Activated CD8-positive, alpha-beta T cell treated with anti-CD3 and anti-CD28 coated beads for 36 hours (primary cell): ENCODE measurements at regions of chr6 and their contacts with region 1.

Region 1: DNA sequence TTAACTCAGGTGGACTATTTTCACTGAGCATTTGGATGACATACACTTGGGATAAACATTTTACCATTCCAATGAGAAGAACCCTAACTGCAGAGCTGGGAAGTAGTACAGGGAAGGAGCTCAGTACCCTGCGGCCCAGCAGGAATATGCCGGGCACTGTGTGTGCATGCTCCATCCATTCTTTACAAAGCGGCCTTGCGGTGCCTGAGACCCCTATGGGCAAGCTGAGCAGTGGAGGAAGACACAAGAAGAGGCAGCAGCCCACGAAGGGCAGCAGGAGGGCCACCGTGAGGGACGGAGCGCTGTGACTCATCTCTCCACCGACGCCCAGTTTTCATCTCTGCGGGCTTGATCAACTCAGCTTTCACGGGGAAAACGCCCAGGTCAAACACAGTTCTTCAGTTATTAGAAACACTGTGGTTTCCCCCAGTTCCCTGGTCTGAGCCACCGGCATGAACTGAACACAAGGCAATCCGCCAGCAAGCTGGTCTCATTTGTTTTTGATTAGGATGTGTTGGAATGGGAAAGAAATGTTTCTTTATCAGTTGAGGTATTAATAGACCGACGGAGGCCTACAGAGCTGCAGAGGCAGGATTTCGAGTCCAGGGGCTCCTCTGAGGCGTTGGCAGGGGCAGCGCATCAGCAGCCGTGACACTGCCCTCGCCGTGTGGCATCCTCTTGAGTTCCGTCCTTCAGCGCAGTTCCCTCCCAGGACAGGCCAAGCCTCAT is 44.9 kb downstream of the IRF4 start:
- DNase-seq: no peak
- ATAC-seq: no peak
- H3K4me3 Mint-ChIP-seq: no peak overlapping the region
- H3K27ac Mint-ChIP-seq: no peak overlapping the region
- H3K4me1 Mint-ChIP-seq: peaks cover 34% of the 10 kb centered on the region
- H3K27me3 Mint-ChIP-seq: no peaks in the 10 kb centered on the region
- CTCF ChIP-seq: no peak

Region 2: DNA sequence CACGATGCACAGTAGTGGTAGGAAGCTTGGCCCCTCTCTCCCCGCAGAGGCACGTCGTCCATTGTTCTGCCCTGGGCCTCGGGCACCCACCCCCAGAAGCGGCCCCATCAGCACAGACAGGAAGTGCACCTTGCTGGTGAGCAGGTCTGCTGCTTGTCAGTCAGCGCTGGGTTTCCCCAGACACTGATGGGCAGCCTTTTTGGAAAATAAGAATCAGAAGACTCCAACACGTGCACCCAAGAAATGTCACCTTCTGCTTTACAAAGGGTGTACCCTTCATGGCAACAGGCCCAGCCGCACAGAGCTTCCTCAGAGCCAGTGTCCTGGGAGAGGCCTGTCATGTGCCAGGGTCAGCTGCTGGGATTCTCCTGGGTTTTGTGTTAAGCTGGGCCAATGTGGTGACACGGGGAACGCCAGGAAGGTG is 79.6 kb before region 1 on chr6:
- CTCF ChIA-PET with region 1: no interaction called
- POLR2A ChIA-PET with region 1: no interaction called
- intact Hi-C with region 1: no loop called
- DNase-seq: peak; percentile 70
- ATAC-seq: peak; percentile 92
- H3K4me3 Mint-ChIP-seq: no peak overlapping the region
- H3K27ac Mint-ChIP-seq: peak overlapping the region; percentile 82
- H3K4me1 Mint-ChIP-seq: peaks cover 13% of the 10 kb centered on the region
- H3K27me3 Mint-ChIP-seq: no peaks in the 10 kb centered on the region
- CTCF ChIP-seq: no peak

Region 3: GRCh38 chr6:484086-484745 is 47.7 kb after region 1 on chr6:
- CTCF ChIA-PET with region 1: interaction called, 6 read pairs
- POLR2A ChIA-PET with region 1: interaction called, 14 read pairs
- intact Hi-C with region 1: no loop called
- DNase-seq: peak; percentile 65
- ATAC-seq: peak; percentile 85
- H3K4me3 Mint-ChIP-seq: peak overlapping the region; percentile 7
- H3K27ac Mint-ChIP-seq: peak overlapping the region; percentile 93
- H3K4me1 Mint-ChIP-seq: peaks cover 79% of the 10 kb centered on the region
- H3K27me3 Mint-ChIP-seq: no peaks in the 10 kb centered on the region
- CTCF ChIP-seq: no peak

Region 4: DNA sequence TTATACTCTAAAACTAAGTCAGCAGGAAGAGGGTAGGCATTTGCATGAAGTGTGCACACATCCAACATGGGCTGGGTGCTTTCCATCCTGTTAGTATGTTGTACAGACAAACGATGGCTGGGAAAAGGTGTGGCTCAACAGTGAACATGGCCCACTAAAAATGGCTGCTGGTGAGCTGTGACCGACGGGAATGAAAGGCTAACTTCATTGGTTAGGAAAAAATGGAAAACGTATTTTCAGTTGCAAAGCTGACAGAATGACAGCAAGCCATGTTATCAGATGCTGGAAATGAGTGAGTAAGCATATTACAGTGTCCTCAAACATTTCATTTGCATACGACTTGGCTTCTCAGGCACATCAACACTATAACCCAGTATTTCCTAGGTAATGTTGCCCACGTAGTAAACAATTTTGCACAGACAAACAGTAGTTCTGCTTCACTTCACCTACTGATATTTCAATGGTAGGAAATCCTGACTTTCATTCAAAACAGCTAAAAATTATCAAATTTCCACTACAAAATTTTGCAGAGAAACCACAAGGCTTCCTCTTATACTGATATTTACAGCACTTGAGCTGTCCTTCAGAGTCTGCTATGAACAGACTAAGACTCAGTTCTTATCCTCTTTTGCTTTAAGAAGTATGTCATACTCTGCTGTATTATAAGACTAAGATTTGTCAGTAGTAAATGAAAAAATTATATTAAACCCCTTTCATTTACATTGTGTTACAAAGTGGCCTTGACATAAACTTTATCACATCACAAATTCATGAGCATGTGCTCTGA is 54.0 kb after region 1 on chr6:
- CTCF ChIA-PET with region 1: interaction called, 6 read pairs
- POLR2A ChIA-PET with region 1: interaction called, 14 read pairs
- intact Hi-C with region 1: loop called (anchors 2 kb)
- DNase-seq: peak; percentile 59
- ATAC-seq: peak; percentile 34
- H3K4me3 Mint-ChIP-seq: peak overlapping the region; percentile 67
- H3K27ac Mint-ChIP-seq: peak overlapping the region; percentile 99
- H3K4me1 Mint-ChIP-seq: peaks cover 93% of the 10 kb centered on the region
- H3K27me3 Mint-ChIP-seq: no peaks in the 10 kb centered on the region
- CTCF ChIP-seq: no peak